Heart left ventricle (tissue), 16 donors: ENCODE measurements at regions of chr9 and their contacts with region 1.

Region 1: GRCh38 chr9:94783102-94783664 is 56.7 kb downstream of the AOPEP start:
- DNase-seq: peak; percentile 71 to 88 (median 78)
- ATAC-seq: peak; percentile 66 to 86 (median 78)
- H3K4me3 ChIP-seq: no peak overlapping the region
- H3K27ac ChIP-seq: peak overlapping the region in 10 of 12 donors; percentile 54 to 90 (median 80)
- H3K4me1 ChIP-seq: peaks cover 0 to 34% (median 19%) of the 10 kb centered on the region in 12 donors
- H3K27me3 ChIP-seq: no peaks in the 10 kb centered on the region
- CTCF ChIP-seq: peak; percentile 49 to 87 (median 73)
- POLR2A ChIP-seq: no peak

Region 2: GRCh38 chr9:94726495-94727191 is 56.5 kb before region 1 on chr9 and contains the start of gene AOPEP:
- intact Hi-C with region 1: loop called in 1 of 10 experiments (anchors 2 kb)
- DNase-seq: peak; percentile 98 to 100 (median 99)
- ATAC-seq: peak; percentile 98 to 100 (median 100)
- H3K4me3 ChIP-seq: peak within 1 kb of the TSS; percentile 38 to 95 (median 85)
- H3K27ac ChIP-seq: peak within 1 kb of the TSS; percentile 8 to 90 (median 84)
- H3K4me1 ChIP-seq: peaks cover 0 to 14% (median 7%) of the 10 kb centered on the region in 12 donors
- H3K27me3 ChIP-seq: no peaks in the 10 kb centered on the region
- CTCF ChIP-seq: no peak
- POLR2A ChIP-seq: peak in 1 of 2 donors; percentile 69
- total RNA-seq, gene AOPEP: 123 to 310 (median 185) TPM

Region 3: GRCh38 chr9:94922098-94922607 is 139.0 kb after region 1 on chr9:
- intact Hi-C with region 1: loop called in 2 of 10 experiments (anchors 10 kb)
- DNase-seq: peak in 2 of 5 donors; percentile 44 to 46
- ATAC-seq: peak; percentile 15 to 42 (median 30)
- H3K4me3 ChIP-seq: peak overlapping the region in 1 of 12 donors; percentile 5
- H3K27ac ChIP-seq: peak overlapping the region; percentile 53 to 82 (median 70)
- H3K4me1 ChIP-seq: peaks cover 3 to 49% (median 34%) of the 10 kb centered on the region in 12 donors
- H3K27me3 ChIP-seq: no peaks in the 10 kb centered on the region
- CTCF ChIP-seq: no peak
- POLR2A ChIP-seq: no peak

Region 4: DNA sequence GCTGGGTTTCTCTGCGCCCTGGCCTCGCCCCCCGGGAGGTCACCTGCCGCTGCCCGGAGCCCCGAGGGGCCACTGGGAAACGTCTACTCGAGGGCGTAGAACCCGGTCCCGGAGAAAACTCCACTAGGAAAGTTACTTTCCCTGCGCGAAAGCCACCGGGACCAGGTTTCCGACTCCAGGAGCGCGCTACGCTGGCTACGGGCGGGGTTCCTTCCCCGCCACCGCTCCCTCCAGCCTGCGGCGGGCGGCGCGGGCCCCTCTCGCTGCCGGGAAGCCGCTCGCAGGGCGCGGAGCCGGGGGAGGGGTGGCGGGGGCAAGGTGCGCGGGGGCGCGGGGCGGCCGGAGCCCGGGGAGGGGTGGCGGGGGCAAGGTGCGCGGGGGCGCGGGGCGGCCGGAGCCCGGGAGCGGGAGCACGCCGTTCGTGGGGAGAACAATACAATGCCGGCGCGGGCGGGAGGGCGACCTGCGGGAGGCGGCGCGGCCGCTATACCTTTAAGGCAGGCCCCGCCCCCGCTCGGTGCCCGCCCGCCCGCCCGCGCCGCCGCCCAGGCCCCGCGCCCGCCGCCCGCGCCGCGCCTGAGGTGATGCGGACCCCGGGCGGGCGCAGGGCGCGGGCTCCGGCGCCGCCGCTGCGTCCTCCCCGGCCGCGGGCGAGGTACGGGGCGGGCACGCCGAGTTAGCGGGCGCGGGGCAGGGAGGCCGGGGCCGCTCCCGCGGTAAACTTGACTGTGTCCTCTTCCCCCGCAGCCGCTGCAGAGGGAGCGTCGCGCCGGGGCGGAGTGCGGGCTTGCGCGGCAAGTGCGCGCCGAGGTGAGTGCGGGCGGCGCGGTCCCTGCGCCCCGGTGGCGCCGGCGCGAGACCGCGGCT is 221.5 kb after region 1 on chr9:
- intact Hi-C with region 1: loop called in 8 of 10 experiments (anchors 1 to 5 kb)
- DNase-seq: peak; percentile 73 to 83 (median 78)
- ATAC-seq: peak in 3 of 4 donors; percentile 17 to 59 (median 44)
- H3K4me3 ChIP-seq: peak overlapping the region; percentile 61 to 94 (median 84)
- H3K27ac ChIP-seq: peak overlapping the region; percentile 95 to 100 (median 99)
- H3K4me1 ChIP-seq: peaks cover 0 to 57% (median 29%) of the 10 kb centered on the region in 12 donors
- H3K27me3 ChIP-seq: peaks cover 0 to 17% (median 0%) of the 10 kb centered on the region in 9 donors
- CTCF ChIP-seq: no peak
- POLR2A ChIP-seq: peak in 1 of 2 donors; percentile 60

Region 5: DNA sequence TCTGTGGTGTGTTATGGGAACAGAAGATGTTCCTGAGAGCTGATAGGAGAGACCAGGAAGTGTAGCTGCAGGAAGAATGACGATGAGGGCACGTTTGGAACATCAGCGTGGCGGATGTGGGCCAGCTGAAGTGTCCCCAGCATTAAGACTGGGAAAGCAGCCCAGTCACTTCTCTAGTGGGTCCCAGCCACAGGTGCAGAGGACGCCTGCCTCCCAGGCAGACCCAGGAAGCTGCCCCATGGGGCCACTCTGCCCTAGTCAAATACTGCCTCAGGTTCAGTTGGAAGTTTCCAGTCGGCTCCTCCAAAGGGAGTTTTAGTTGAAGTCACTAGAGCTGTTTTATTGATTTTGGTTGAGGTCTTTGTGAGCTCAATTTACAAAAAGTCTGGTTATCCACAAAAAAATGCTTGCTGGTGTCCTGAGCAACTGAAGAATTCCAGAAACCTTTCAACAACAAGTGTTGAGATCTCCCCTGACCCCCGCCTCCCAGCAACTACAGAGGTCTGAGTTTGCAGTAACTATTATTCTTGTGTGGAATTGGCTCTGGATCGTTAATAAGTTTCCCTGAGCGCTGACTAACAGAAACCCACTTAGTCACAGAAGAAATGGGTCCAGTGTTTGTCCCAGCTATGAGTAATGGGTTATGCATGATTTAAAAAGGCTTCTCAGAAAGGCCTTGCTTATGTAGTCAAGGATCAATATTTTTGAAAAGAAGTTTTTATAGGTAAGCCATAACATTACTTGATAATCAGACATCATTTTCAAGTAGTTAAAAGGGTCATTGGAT is 240.2 kb after region 1 on chr9:
- intact Hi-C with region 1: loop called in 2 of 10 experiments (anchors 5 kb)
- DNase-seq: peak in 4 of 5 donors; percentile 47 to 78 (median 59)
- ATAC-seq: peak; percentile 37 to 52 (median 47)
- H3K4me3 ChIP-seq: peak overlapping the region in 6 of 12 donors; percentile 0 to 34 (median 12)
- H3K27ac ChIP-seq: peak overlapping the region; percentile 20 to 99 (median 78)
- H3K4me1 ChIP-seq: peaks cover 20 to 100% (median 94%) of the 10 kb centered on the region in 12 donors
- H3K27me3 ChIP-seq: no peaks in the 10 kb centered on the region
- CTCF ChIP-seq: no peak
- POLR2A ChIP-seq: no peak

Region 6: DNA sequence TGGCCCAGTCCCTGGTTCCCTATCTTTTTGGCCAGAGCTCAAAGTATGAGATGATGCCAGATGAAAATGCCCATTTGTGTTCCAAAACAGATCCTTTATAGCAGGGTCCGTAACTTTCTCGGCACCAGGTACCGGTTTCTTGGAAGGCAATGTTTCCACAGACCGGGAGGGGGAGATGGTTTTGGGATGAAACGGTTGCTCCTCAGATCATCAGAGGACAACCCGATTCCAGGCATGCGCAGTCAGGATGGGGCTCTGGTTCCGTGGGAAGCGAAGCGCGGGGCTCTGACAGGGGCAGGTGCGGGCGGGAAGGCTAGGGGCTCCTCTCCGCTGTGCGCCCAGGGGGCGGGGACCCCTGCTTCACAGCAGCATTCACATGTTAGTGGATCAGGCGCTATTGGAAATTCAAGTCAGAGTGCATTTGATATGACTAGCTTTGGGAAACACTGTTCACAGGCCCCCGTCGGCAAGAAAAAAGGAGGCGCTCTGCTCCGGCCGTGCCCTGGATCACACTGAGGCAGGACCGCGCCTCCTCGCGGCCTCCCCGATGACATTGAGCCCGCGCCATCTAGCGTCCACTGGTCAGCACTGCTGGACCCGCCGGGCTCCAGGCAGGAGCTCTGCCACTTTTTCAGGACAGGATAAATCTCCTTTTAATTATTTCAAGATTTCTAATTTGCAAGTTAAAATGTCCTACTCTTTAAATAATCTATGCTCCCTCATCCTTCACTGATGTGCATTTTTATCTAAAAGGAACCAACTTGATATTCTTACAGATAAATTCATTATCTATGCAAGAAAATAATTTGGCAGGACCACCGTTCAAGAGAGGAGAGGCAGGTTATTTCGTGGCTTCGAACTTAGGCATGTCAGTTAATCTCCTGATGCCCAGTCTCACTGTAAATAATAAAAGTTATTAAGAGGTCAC is 344.3 kb after region 1 on chr9:
- intact Hi-C with region 1: loop called (anchors 1 to 5 kb)
- DNase-seq: peak; percentile 86 to 92 (median 88)
- ATAC-seq: peak; percentile 83 to 91 (median 89)
- H3K4me3 ChIP-seq: peak overlapping the region in 11 of 12 donors; percentile 8 to 58 (median 45)
- H3K27ac ChIP-seq: peak overlapping the region in 4 of 12 donors; percentile 25 to 59 (median 48)
- H3K4me1 ChIP-seq: peaks cover 0 to 24% (median 8%) of the 10 kb centered on the region in 12 donors
- H3K27me3 ChIP-seq: no peaks in the 10 kb centered on the region
- CTCF ChIP-seq: peak; percentile 92 to 99 (median 98)
- POLR2A ChIP-seq: no peak